ENCODE measurements at regions of chr7 and their contacts with region 1.

Region 1: DNA sequence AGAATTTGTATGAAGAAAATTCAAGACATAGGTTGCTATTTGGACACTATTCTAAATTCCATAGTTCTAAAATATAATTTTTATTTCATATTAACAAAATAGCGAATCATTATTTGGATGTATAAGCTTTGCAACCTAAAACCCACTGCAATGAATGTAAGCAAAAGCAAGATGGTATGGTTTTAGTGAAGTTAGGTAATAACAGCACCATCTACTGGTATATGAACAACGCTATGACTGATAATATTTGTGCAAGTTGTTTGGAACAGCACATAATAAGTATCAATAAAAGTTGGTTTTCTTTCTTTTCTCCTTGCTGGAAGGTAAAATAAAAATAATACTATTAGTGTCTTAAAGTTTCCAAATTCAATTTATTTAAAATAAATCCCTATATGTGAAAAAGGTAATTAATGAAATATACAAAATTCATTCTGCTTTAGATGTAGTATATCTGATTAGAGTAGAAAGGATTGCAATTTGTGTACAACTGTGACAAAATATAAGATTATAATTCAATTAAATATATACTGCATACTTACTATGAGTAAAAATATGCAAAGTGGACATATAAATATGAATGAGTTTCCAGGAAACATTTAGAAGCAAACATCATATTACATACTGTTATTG is 79.0 kb upstream of the LSM8 start:
- DNase-seq: no peak
- ATAC-seq: peak; percentile 79
- H3K4me3 ChIP-seq: no peak overlapping the region
- H3K27ac ChIP-seq: no peak overlapping the region
- H3K4me1 ChIP-seq: no peaks in the 10 kb centered on the region
- H3K27me3 ChIP-seq: no peaks in the 10 kb centered on the region
- CTCF ChIP-seq: peak; percentile 57; the same call in 1 of the 2 replicates

Region 2: DNA sequence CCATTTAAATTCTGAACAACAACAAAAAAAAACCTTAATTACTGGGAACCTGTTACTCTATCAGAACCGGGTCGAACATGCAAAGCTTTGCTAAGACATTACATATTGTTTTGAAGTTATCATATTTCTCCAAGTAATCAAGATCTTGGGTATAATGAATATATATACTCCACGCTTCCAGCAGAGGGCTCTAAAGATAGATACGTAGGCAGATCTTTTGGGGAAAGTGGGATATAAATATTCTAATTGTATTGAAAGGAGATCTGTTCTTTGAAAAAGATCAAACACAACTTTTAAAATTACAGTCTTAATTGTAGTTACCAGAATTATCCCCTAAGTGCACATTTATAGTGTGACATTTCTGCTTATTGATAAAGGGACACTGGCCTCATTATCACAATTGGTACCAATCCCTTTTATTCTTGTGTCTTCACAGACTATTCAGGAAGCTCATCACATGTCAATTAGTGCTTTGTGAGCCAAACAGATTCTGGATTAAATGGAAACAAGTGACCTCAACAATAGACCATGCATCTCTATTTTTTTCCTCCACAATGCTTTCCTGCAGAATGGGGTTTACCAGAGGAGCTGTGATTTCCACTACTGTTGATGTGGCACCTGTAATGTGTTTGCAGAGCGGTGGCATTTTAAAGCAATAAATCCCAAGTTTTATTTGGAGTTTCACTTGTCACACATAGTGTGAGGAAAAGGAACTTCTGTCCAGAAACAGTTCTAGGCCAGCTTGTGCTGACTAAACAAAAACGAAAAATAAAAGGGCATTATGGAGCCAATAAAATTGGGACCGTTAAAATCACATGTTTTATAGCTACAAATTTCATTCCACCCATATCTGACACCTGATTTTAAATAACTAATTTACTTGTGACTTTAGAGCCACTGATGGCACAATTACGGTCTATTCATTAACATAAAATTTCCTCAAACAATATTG is 354.0 kb before region 1 on chr7:
- CTCF ChIA-PET with region 1: no interaction called
- POLR2A ChIA-PET with region 1: no interaction called
- in situ Hi-C with region 1: no loop called
- intact Hi-C with region 1: loop called (anchors 2 kb)
- DNase-seq: no peak
- ATAC-seq: no peak
- H3K4me3 ChIP-seq: no peak overlapping the region
- H3K27ac ChIP-seq: no peak overlapping the region
- H3K4me1 ChIP-seq: no peaks in the 10 kb centered on the region
- H3K27me3 ChIP-seq: no peaks in the 10 kb centered on the region
- CTCF ChIP-seq: peak; percentile 65; the same call in 1 of the 2 replicates

Measured in Panc1 (cell line).